Activated B cell treated with CpG ODN at 0.5 μM for 24 hours (primary cell): ENCODE measurements at regions of chr5 and their contacts with region 1.

Region 1: DNA sequence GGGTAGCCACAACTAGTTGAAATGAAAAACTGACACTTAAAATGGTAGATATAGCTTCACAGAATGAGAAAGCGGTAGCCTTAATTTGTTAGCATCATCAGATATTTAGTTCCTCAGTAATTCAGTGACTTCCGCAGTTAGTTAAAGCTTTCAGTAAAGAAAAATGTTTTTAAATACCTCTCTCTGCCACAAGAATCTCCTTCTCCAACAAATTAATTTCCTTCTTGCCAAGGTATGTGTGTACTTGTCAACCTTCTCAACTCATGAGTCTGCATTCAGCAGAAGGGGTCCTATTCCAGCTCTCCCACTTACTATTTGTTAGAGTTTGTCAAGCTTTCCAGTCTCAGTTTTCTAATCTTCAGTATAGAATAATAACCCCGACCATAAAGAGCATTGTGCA is 26.3 kb upstream of the ERAP1 start:
- DNase-seq: no peak
- ATAC-seq: no peak
- H3K4me3 Mint-ChIP-seq: no peak overlapping the region
- H3K27ac Mint-ChIP-seq: no peak overlapping the region
- H3K4me1 Mint-ChIP-seq: no peaks in the 10 kb centered on the region
- H3K27me3 Mint-ChIP-seq: no peaks in the 10 kb centered on the region
- CTCF ChIP-seq: no peak

Region 2: GRCh38 chr5:96315431-96315830 is 518.6 kb before region 1 on chr5:
- CTCF ChIA-PET with region 1: no interaction called
- POLR2A ChIA-PET with region 1: no interaction called
- intact Hi-C with region 1: no loop called
- DNase-seq: no peak
- ATAC-seq: no peak
- H3K4me3 Mint-ChIP-seq: no peak overlapping the region
- H3K27ac Mint-ChIP-seq: no peak overlapping the region
- H3K4me1 Mint-ChIP-seq: no peaks in the 10 kb centered on the region
- H3K27me3 Mint-ChIP-seq: peaks cover 12% of the 10 kb centered on the region
- CTCF ChIP-seq: no peak

Region 3: DNA sequence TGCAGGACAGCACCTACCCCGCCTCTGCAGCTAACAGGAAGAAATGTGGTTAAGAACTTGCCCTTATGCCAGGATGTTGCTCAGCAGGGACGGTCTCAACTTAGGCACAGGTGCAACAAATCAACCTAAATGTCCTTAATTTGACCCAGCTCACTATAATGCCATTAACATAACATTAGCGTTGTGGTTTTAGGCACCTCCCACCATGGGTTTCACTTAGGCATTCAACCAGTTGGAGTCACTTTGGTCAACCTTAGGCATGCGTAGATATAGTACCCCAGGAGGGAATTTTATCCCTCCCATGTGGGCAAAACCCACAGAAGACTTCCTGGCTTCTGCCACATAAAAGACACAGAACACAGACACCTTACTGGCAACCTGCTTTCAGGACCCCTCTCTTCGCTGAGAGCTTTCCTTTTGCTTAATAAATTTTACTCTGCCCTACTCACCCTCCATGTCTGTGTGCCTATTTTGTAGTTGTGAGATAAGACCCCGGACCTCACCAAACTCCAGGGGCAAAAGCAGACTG is 17.5 kb before region 1 on chr5:
- CTCF ChIA-PET with region 1: no interaction called
- POLR2A ChIA-PET with region 1: no interaction called
- intact Hi-C with region 1: loop called (anchors 2 kb)
- DNase-seq: no peak
- ATAC-seq: peak; percentile 81
- H3K4me3 Mint-ChIP-seq: peak overlapping the region; percentile 77
- H3K27ac Mint-ChIP-seq: peak overlapping the region; percentile 87
- H3K4me1 Mint-ChIP-seq: peaks cover 25% of the 10 kb centered on the region
- H3K27me3 Mint-ChIP-seq: no peaks in the 10 kb centered on the region
- CTCF ChIP-seq: no peak